Endothelial cell of umbilical vein (primary cell): ENCODE measurements at regions of chr16 and their contacts with region 1.

Region 1: DNA sequence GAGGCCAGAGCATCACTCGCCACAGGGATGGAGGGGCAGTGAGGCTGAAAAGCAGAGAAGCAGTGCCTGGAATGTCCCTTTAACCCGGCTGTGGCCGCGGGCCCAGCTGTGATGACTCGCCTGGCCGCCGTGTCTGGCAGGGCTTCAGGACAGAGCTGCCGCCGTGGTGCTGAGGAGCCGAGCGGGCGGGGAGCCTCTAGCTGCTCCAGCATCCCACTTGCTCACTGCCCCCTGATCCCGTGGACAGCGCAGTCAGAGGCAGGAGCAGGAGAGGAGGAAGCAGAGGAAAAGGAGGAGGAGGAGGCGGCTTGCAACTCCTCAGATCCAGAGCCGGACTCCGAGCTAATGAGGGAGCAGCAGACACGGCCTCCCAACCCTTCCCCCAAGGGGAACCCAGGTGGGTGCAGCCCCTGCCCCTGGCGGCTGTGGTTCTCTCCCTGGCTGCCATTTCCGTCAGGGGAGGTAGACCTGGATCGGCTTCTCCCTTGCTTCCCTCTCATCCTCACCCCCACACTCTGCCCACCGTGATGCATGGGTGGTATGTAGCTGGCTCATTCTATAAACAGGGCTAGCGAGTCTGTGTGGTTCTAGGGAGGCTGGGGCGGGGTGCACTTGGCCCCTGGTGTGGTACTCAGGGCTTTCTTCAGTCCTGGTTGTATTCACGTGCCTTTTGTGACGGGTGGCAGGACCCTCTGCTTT is 165.7 kb downstream of the CMIP start:
- DNase-seq: peak; percentile 77
- H3K4me3 ChIP-seq: peak overlapping the region in 1 of 3 experiments; percentile 18
- H3K27ac ChIP-seq: peak overlapping the region; percentile 49
- H3K4me1 ChIP-seq: peaks cover 46% of the 10 kb centered on the region
- H3K27me3 ChIP-seq: no peaks in the 10 kb centered on the region
- CTCF ChIP-seq: no peak
- POLR2A ChIP-seq: no peak

Region 2: GRCh38 chr16:81551151-81551808 is 59.0 kb before region 1 on chr16:
- CTCF ChIA-PET with region 1: interaction called, 3 read pairs
- POLR2A ChIA-PET with region 1: no interaction called
- dilution Hi-C with region 1: no loop called
- intact Hi-C with region 1: loop called (anchors 5 kb)
- DNase-seq: peak; percentile 76
- H3K4me3 ChIP-seq: no peak overlapping the region
- H3K27ac ChIP-seq: peak overlapping the region; percentile 87
- H3K4me1 ChIP-seq: peaks cover 46% of the 10 kb centered on the region
- H3K27me3 ChIP-seq: no peaks in the 10 kb centered on the region
- CTCF ChIP-seq: no peak
- POLR2A ChIP-seq: no peak

Region 3: DNA sequence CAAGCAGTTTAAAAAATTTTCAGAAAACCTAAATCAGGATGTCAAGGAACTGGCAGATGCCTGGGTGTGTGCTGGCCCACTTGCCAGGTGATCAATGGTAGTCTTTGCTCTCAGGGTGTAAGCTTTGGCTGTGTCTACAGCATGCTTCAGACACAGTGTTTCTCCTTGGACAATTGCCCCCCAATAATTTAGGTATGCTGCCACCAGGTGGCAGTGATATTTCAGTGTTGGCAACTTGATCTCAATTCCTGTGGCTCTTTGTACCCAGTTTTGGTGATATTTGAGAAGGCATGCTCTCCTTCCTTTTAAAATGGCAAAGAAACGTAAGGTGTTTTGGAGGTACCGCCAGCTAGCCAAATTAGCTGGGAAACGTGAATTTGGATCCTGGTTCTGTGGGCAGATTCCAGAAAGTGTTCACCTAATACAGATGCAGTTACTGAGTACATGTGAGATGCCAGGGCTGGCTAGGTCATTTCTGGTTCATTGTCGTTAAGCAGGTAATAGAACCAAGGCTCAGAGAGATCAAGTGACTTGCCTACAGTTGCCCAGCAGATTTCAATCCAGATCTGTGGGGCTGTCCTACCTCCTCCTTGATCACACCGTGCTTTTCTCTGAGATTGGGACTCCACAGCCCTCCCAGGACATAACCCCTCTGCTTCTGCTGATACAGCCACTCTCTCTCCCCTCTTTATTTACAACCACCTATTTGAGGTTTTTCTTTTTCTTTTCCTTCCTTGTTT is 13.2 kb after region 1 on chr16:
- CTCF ChIA-PET with region 1: interaction called, 10 read pairs
- POLR2A ChIA-PET with region 1: no interaction called
- dilution Hi-C with region 1: no loop called
- intact Hi-C with region 1: no loop called
- DNase-seq: peak; percentile 80
- H3K4me3 ChIP-seq: no peak overlapping the region
- H3K27ac ChIP-seq: no peak overlapping the region
- H3K4me1 ChIP-seq: peaks cover 31% of the 10 kb centered on the region
- H3K27me3 ChIP-seq: no peaks in the 10 kb centered on the region
- CTCF ChIP-seq: peak; percentile 57 to 59
- POLR2A ChIP-seq: no peak